ENCODE measurements at regions of chr17 and their contacts with region 1.

Region 1: DNA sequence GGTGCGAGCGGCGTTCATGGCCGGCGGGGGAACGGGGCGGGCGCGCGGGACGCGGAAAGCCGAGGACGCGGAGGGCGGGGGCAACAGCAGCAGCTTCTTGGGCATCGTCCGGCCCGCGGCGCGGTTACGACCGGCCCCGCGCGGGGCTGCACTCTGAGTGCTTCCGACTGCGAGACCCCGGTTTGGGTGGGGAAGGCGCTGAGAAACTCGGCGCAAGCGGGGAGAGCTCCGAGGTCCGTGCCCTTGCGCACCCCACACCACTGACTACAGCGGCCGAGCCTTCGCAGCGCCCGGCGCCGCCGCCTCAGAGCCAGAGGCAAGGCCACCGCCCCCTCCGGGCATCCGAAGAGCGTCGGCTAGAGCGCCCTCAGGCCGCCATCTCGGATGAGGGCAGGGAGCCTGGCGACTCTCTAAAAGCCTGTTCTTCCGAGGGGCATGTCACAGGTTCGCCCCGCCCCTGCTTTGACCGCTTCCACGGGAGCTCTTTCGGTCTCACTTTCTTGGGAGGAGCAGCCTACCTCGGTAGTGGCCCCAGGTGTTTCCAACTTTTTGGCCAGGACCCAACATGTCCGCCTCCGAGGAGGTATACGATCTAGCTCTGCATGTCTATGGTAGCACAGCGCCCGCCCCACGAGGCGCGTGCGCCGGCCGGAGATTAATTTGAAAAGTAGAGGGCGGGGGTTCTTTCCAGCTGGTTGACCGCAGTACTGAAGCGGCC is at the start of gene PRPSAP1:
- DNase-seq: peak; percentile 94
- H3K4me3 Mint-ChIP-seq: peak within 1 kb of the TSS; percentile 95
- H3K27ac Mint-ChIP-seq: peak within 1 kb of the TSS; percentile 98
- H3K4me1 Mint-ChIP-seq: peaks cover 8% of the 10 kb centered on the region
- H3K27me3 Mint-ChIP-seq: no peaks in the 10 kb centered on the region
- CTCF ChIP-seq: peak; percentile 35
- total RNA-seq, gene PRPSAP1: 25.9 and 42.3 TPM in 2 replicates

Region 2: GRCh38 chr17:76264755-76265596 is 88.8 kb before region 1 on chr17 and contains the start of gene UBALD2:
- CTCF ChIA-PET with region 1: no interaction called
- POLR2A ChIA-PET with region 1: interaction called, 13 read pairs
- intact Hi-C with region 1: no loop called
- DNase-seq: peak; percentile 99
- H3K4me3 Mint-ChIP-seq: peak within 1 kb of the TSS; percentile 76
- H3K27ac Mint-ChIP-seq: peak within 1 kb of the TSS; percentile 87
- H3K4me1 Mint-ChIP-seq: peaks cover 7% of the 10 kb centered on the region
- H3K27me3 Mint-ChIP-seq: no peaks in the 10 kb centered on the region
- CTCF ChIP-seq: no peak
- total RNA-seq, gene UBALD2: 84.9 and 109 TPM in 2 replicates

Region 3: GRCh38 chr17:76365256-76365903 is 11.6 kb after region 1 on chr17:
- CTCF ChIA-PET with region 1: interaction called, 10 read pairs
- POLR2A ChIA-PET with region 1: interaction called, 10 read pairs
- intact Hi-C with region 1: no loop called
- DNase-seq: peak; percentile 40
- H3K4me3 Mint-ChIP-seq: no peak overlapping the region
- H3K27ac Mint-ChIP-seq: no peak overlapping the region
- H3K4me1 Mint-ChIP-seq: peaks cover 10% of the 10 kb centered on the region
- H3K27me3 Mint-ChIP-seq: no peaks in the 10 kb centered on the region
- CTCF ChIP-seq: peak; percentile 8

Region 4: DNA sequence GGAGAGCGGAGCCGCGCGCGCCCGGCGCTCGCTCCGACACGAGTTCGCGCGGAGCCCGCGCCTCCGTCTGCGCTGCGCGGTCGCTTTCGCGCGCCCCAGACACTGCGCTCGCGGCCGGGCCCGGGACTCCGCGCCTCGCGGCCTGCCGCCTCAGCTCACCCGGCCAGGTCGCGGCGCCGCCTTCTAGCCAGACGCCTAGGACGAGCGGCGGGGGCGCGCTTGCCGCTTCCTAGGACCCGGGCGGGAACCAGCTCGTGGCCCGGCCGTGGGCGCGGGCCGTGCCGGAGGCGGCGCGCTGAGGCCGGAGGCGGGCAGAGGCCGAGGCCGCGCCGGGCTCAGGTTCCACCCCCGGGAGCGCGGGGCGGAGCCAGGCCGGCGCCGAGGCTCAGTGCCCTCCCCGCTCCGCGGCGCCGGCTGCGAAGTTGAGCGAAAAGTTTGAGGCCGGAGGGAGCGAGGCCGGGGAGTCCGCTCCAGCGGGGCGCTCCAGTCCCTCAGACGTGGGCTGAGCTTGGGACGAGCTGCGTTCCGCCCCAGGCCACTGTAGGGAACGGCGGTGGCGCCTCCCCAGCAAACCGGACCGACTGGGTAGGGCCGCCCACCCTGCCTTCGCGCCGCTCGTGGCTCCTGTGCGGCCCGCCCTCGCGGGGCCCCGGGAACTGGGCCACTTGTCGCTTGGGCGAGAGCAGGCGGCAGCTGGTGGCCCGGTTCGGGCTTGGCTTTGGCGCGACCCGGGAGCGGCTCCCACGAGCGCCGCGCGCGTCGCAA is 30.6 kb after region 1 on chr17 and contains the start of gene SPHK1:
- CTCF ChIA-PET with region 1: interaction called, 10 read pairs
- POLR2A ChIA-PET with region 1: interaction called, 49 read pairs
- intact Hi-C with region 1: no loop called
- DNase-seq: peak; percentile 80
- H3K4me3 Mint-ChIP-seq: peak within 1 kb of the TSS; percentile 79
- H3K27ac Mint-ChIP-seq: no peak within 1 kb of the TSS
- H3K4me1 Mint-ChIP-seq: no peaks in the 10 kb centered on the region
- H3K27me3 Mint-ChIP-seq: no peaks in the 10 kb centered on the region
- CTCF ChIP-seq: no peak
- total RNA-seq, gene SPHK1: 7.1 and 12.6 TPM in 2 replicates

Region 5: DNA sequence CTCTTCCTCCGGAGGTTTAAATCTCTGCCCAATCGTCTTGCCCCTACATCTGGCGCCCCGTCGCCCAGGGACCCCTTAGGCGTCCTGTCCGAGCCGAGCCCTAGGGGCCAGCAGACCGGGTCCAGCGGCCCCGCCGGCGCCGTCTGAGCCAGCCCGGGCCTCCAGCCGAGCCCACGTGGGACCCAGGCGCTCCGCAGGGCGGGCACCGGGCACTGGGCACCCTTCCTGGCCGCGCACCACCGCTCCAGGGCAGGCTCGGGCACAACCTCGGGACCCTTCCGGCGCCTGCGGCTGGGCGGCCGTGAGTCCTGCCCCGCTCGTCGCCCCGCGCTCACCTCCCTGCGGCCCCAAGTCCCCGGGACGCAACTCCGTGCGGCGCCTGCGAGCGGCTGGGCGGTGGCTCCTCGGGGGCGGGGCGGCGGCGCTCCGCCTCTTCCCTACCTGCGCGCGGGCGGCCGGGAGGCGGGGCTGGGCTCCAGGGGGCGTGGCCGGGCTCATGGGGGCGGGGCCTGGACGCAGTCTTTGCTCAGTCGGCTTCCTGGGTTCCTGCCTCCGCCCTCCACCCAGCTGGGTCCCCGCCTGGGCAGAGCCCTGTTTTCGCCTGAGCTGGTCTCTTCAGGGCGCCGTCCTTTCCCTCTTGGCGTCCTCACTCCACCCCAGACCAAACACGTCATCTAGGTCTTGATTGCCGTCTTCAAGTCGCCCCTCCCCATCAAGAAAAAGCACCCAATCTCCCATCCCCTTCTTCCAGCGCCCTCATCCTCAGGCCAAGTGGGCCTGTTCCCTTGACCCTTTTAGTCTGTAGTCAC is 147.5 kb after region 1 on chr17 and contains the start of gene RHBDF2:
- CTCF ChIA-PET with region 1: no interaction called
- POLR2A ChIA-PET with region 1: interaction called, 10 read pairs
- intact Hi-C with region 1: no loop called
- DNase-seq: peak; percentile 84
- H3K4me3 Mint-ChIP-seq: peak within 1 kb of the TSS; percentile 80
- H3K27ac Mint-ChIP-seq: peak within 1 kb of the TSS; percentile 90
- H3K4me1 Mint-ChIP-seq: peaks cover 30% of the 10 kb centered on the region
- H3K27me3 Mint-ChIP-seq: no peaks in the 10 kb centered on the region
- CTCF ChIP-seq: no peak
- total RNA-seq, gene RHBDF2: 17.5 and 33.4 TPM in 2 replicates

Measured in MCF 10A (cell line).